Dendritic cell treated with granulocyte-macrophage colony-stimulating factor and Interleukin-4, amounts not matched to agents 40 ng/mL and 50 ng/mL, for 4 days (primary cell): ENCODE measurements at regions of chrX and their contacts with region 1.

Region 1: GRCh38 chrX:53433651-53434639 is at the start of gene HSD17B10:
- H3K4me3 Mint-ChIP-seq: peak within 1 kb of the TSS; percentile 93
- H3K27ac Mint-ChIP-seq: peak within 1 kb of the TSS; percentile 91
- H3K4me1 Mint-ChIP-seq: peaks cover 42% of the 10 kb centered on the region
- H3K27me3 Mint-ChIP-seq: no peaks in the 10 kb centered on the region

Region 2: DNA sequence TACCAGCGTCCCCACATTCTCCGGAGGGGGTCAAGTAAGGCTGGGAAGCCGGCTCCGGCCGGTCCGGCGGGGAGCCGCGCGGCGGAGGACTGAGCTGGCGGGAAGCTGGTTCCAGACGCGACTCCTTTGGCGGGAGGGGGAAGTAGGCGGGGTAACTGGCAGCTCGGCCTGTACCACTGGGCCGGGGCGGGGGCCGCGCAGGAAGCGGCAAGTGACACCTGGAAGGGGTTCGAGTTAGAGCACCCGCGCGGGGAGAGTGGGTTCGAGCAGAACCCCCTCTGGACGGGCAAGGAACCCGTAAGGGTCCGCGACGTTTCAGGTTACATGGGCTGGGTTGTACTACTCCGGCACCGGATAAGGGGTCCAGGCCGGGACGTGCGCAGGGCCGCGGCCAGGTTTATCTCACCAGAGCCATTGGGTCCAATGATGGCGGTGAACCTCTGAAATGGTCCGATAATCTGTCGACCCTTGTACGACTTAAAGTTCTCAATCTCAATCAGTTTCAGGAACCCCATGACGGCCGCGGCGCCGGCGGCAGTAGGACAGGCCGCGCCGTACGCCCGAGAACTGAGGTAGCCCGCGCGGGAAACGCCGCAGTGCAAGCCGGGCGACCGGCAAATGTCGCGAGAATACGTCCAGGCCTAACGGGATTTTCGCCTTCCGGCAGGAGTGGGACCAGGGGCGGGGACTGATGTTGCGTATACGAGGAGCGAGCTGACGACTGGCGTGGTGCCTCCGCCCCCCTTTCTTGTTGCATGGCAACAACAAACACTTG is 11.7 kb before region 1 on chrX and contains the start of gene SMC1A:
- intact Hi-C with region 1: loop called (anchors 1 kb)
- H3K4me3 Mint-ChIP-seq: peak within 1 kb of the TSS; percentile 96
- H3K27ac Mint-ChIP-seq: peak within 1 kb of the TSS; percentile 92
- H3K4me1 Mint-ChIP-seq: peaks cover 26% of the 10 kb centered on the region
- H3K27me3 Mint-ChIP-seq: no peaks in the 10 kb centered on the region